Head of caudate nucleus (tissue), 42 donors: ENCODE measurements at regions of chr10 and their contacts with region 1.

Region 1: GRCh38 chr10:116113721-116114501 is 159.1 kb downstream of the GFRA1 start:
- DNase-seq: peak in 41 of 42 donors; percentile 13 to 89 (median 59)

Region 2: DNA sequence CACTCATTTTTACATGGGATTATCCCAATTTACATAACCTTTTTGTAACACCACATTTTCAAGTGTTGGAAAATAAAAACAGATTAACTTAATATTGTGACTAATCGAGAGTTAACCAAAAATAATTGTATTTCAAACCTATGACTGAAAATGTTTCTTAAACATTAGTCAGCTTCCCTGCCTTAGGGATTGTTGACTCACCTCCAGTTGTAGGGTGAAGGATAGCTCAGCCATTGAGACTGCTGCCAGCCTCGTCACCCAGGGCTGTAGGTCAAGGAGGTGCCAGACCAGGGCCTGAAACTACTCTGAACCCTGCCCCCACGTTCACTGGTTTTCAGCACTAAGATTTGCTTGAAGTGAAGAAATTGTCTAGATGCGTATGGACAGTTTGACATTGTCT is 192.1 kb before region 1 on chr10:
- intact Hi-C with region 1: no loop called
- DNase-seq: no peak

Region 3: DNA sequence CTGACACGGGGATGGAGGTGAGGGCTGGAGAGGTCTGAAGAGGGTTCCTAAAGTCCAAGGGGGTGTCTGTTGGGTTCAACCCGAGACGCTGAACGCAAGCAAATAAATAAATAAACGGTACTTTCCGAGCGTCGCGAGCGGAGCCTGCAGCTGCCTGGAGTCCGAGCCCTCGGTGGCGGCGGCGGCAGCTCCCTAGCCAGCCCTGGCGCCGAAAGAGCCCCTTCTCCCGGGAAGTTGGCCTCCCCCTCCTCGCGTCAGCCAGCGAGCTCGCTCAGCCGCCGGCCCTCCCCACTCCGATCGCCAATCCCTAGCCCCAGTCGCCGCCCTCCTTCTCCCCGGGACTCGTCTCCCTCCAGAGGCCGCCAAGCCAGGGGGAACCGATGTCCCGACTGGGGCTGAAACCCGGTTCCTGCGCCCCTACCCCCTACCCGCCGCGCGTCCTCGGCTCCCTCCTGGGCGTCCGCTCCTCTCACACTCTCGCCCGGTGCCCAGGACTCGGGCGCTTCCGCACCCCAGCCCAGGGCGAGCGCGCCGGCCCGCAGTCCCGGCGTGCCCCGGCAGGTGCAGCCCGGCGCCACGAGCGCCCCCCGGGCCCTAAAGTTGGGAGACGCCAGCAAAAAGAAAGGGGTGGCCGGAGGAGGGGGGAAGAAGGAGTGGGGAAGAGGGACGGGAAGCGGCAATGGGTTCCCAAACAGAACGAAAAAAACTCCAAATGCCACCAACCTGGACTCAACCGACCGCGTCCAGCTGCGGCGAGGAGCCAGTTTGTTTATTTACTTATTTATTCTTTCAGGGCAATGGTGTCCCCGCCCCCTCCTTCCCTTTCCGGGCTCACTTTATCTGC is 158.8 kb after region 1 on chr10 and contains the start of gene GFRA1:
- intact Hi-C with region 1: loop called (anchors 5 kb)
- DNase-seq: peak in 36 of 42 donors; percentile 11 to 63 (median 41)

Region 4: DNA sequence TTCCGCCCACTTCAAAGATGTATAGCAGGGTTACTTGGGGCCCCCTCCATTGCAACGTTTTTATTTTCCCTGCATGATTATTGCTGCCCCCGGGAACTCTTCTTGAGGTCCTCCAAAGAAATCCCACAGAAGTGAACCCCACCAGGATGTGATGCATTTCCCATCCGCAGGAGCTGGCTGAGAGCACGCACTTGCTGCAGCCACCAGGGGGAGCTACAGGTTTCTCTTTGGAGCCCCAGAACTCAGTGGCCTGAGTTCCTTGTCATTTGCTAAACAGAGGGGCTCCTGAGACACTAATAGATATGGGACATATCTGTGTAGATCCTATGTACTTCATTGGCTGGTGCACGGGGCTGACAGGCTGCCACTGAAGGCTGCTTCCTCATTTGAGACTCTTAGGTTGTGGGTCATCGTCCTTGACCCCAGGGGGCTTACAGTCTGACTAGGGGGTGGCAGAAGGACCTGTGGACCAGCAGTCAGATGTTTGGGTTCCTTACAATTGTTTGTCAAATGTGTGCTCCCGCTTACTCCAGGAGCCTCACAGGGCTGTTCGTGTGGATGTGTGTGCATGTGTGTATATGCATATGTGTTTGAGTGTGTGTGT is 683.1 kb after region 1 on chr10:
- intact Hi-C with region 1: no loop called
- DNase-seq: peak; percentile 67 to 96 (median 88)